ENCODE measurements at regions of chr5 and their contacts with region 1.

Region 1: GRCh38 chr5:174311531-174312269 is 266.2 kb downstream of the NSG2 start:
- DNase-seq: peak; percentile 62
- H3K4me3 Mint-ChIP-seq: peak overlapping the region; percentile 24
- H3K27ac Mint-ChIP-seq: no peak overlapping the region
- H3K4me1 Mint-ChIP-seq: no peaks in the 10 kb centered on the region
- H3K27me3 Mint-ChIP-seq: peaks cover 42% of the 10 kb centered on the region
- CTCF ChIP-seq: peak; percentile 99

Region 2: DNA sequence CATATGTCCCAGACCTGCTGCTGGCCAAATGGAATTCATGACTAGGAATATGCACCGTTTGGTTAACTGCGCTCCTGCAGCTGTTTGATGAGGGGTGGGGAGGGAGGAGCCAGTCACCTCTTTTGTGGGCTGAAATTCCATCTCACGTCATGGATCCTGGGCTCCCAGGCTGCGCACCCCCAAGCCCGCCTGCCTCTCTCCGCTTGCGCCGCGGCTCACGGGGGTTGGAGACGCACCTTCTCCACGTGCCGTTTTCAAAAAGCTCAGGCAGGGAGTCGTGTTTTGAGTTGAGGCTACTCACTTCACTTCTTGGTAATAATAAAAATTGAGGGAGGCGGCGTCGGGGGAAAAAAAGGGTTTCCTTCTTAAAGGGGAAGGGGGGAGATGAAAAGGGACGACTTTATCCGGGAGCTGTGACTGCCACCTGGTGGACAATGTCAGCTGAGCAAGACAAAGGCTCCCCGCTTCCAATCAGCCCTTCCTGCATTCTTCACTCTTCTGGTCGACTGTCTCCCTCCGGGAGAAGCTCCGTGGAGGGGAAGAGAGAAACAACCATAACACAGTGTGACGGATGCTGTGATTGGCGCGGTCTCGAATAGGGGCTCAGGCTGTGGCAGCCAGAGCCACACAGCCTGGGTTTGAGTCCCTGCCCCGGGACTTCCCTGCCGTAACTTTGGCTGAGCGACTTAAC is 338.6 kb before region 1 on chr5:
- CTCF ChIA-PET with region 1: interaction called, 32 read pairs
- POLR2A ChIA-PET with region 1: no interaction called
- intact Hi-C with region 1: no loop called
- DNase-seq: peak; percentile 87
- H3K4me3 Mint-ChIP-seq: peak overlapping the region; percentile 59
- H3K27ac Mint-ChIP-seq: peak overlapping the region; percentile 57
- H3K4me1 Mint-ChIP-seq: peaks cover 23% of the 10 kb centered on the region
- H3K27me3 Mint-ChIP-seq: peaks cover 20% of the 10 kb centered on the region
- CTCF ChIP-seq: peak; percentile 95

Region 3: GRCh38 chr5:174045470-174046025 is 266.2 kb before region 1 on chr5 and contains the start of gene NSG2:
- CTCF ChIA-PET with region 1: interaction called, 588 read pairs
- POLR2A ChIA-PET with region 1: interaction called, 31 read pairs
- intact Hi-C with region 1: loop called (anchors 1 kb)
- DNase-seq: peak; percentile 96
- H3K4me3 Mint-ChIP-seq: no peak within 1 kb of the TSS
- H3K27ac Mint-ChIP-seq: no peak within 1 kb of the TSS
- H3K4me1 Mint-ChIP-seq: no peaks in the 10 kb centered on the region
- H3K27me3 Mint-ChIP-seq: peaks cover 42% of the 10 kb centered on the region
- CTCF ChIP-seq: peak; percentile 99
- total RNA-seq, gene NSG2: not detected in 2 replicates

Region 4: GRCh38 chr5:174300941-174301761 is 10.5 kb before region 1 on chr5:
- CTCF ChIA-PET with region 1: interaction called, 31 read pairs
- POLR2A ChIA-PET with region 1: no interaction called
- intact Hi-C with region 1: no loop called
- DNase-seq: no peak
- H3K4me3 Mint-ChIP-seq: no peak overlapping the region
- H3K27ac Mint-ChIP-seq: no peak overlapping the region
- H3K4me1 Mint-ChIP-seq: no peaks in the 10 kb centered on the region
- H3K27me3 Mint-ChIP-seq: peaks cover 43% of the 10 kb centered on the region
- CTCF ChIP-seq: no peak

Measured in MCF 10A (cell line).